CD4-positive, alpha-beta T cell (primary cell): ENCODE measurements at regions of chr1 and their contacts with region 1.

Region 1: DNA sequence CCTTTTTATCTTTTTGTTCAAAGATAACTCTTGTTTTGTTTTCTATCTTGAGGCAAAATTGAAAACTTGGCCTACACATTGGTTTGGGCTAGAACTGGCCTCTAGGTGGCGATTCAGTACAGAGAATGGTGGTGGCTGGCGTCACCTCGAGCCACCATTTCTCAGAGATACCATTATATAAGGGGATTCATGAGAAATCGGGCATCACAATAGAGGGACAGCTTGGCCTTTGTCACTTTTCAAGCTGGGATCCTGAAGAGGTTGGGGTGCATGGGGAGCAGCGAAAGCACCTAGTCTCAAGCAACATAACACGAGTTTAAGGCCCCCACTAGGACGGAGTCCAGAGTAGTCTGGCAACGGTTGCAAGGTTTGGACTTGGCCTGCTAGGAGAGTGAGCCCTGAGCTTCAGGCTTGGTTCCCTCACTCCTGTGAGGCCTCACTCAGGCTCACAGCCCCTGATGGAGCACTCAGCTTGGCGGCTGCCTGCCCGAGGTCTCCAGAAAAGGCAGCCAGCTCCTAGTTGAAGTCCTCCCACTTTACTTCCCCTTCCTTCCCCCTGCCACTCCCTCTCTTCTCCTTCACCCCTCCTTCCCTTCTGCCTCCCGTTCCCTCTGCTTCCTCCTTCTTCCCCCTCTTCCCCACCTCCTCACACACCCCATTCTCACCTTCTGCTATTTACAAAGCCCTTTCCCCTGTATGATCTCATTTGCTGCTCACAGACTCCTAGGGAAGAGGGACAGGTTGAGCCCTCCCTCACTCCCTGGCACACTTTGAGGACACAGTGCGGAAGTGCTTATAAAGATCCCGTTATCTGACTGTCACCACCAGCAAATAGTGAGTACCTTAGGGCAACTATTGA is 67.8 kb downstream of the LRIG2 start:
- DNase-seq: peak; percentile 20 to 75 (median 45)
- ATAC-seq: peak; percentile 76
- H3K4me3 ChIP-seq: no peak overlapping the region
- H3K4me3 Mint-ChIP-seq: peak overlapping the region; percentile 63
- H3K27ac ChIP-seq: no peak overlapping the region
- H3K27ac Mint-ChIP-seq: peak overlapping the region; percentile 25
- H3K4me1 ChIP-seq: peaks cover 7% of the 10 kb centered on the region
- H3K4me1 Mint-ChIP-seq: peaks cover 34% of the 10 kb centered on the region
- H3K27me3 ChIP-seq: no peaks in the 10 kb centered on the region
- H3K27me3 Mint-ChIP-seq: no peaks in the 10 kb centered on the region
- CTCF ChIP-seq: peak; percentile 83

Region 2: GRCh38 chr1:113452921-113453770 is 312.3 kb after region 1 on chr1:
- CTCF ChIA-PET with region 1: interaction called, 3 read pairs
- POLR2A ChIA-PET with region 1: interaction called, 4 read pairs
- intact Hi-C with region 1: loop called (anchors 1 to 2 kb)
- DNase-seq: peak in 5 of 14 experiments; percentile 0 to 47 (median 21)
- ATAC-seq: peak; percentile 59
- H3K4me3 ChIP-seq: no peak overlapping the region
- H3K4me3 Mint-ChIP-seq: no peak overlapping the region
- H3K27ac ChIP-seq: no peak overlapping the region
- H3K27ac Mint-ChIP-seq: no peak overlapping the region
- H3K4me1 ChIP-seq: no peaks in the 10 kb centered on the region
- H3K4me1 Mint-ChIP-seq: no peaks in the 10 kb centered on the region
- H3K27me3 ChIP-seq: no peaks in the 10 kb centered on the region
- H3K27me3 Mint-ChIP-seq: no peaks in the 10 kb centered on the region
- CTCF ChIP-seq: peak; percentile 65

Region 3: GRCh38 chr1:113677250-113678158 is 536.7 kb after region 1 on chr1:
- CTCF ChIA-PET with region 1: no interaction called
- POLR2A ChIA-PET with region 1: no interaction called
- intact Hi-C with region 1: loop called (anchors 1 kb)
- DNase-seq: peak in 4 of 14 experiments; percentile 3 to 58 (median 52)
- ATAC-seq: peak; percentile 49
- H3K4me3 ChIP-seq: no peak overlapping the region
- H3K4me3 Mint-ChIP-seq: no peak overlapping the region
- H3K27ac ChIP-seq: no peak overlapping the region
- H3K27ac Mint-ChIP-seq: no peak overlapping the region
- H3K4me1 ChIP-seq: no peaks in the 10 kb centered on the region
- H3K4me1 Mint-ChIP-seq: no peaks in the 10 kb centered on the region
- H3K27me3 ChIP-seq: no peaks in the 10 kb centered on the region
- H3K27me3 Mint-ChIP-seq: no peaks in the 10 kb centered on the region
- CTCF ChIP-seq: peak; percentile 69

Region 4: GRCh38 chr1:113850080-113850803 is 709.4 kb after region 1 on chr1:
- CTCF ChIA-PET with region 1: no interaction called
- POLR2A ChIA-PET with region 1: no interaction called
- intact Hi-C with region 1: loop called in 1 of 2 experiments (anchors 5 kb)
- DNase-seq: peak in 1 of 14 experiments; percentile 44
- ATAC-seq: peak; percentile 61
- H3K4me3 ChIP-seq: no peak overlapping the region
- H3K4me3 Mint-ChIP-seq: peak overlapping the region; percentile 36
- H3K27ac ChIP-seq: peak overlapping the region in 1 of 2 donors; percentile 29
- H3K27ac Mint-ChIP-seq: peak overlapping the region; percentile 83
- H3K4me1 ChIP-seq: peaks cover 8% of the 10 kb centered on the region
- H3K4me1 Mint-ChIP-seq: peaks cover 15% of the 10 kb centered on the region
- H3K27me3 ChIP-seq: no peaks in the 10 kb centered on the region
- H3K27me3 Mint-ChIP-seq: no peaks in the 10 kb centered on the region
- CTCF ChIP-seq: no peak

Region 5: DNA sequence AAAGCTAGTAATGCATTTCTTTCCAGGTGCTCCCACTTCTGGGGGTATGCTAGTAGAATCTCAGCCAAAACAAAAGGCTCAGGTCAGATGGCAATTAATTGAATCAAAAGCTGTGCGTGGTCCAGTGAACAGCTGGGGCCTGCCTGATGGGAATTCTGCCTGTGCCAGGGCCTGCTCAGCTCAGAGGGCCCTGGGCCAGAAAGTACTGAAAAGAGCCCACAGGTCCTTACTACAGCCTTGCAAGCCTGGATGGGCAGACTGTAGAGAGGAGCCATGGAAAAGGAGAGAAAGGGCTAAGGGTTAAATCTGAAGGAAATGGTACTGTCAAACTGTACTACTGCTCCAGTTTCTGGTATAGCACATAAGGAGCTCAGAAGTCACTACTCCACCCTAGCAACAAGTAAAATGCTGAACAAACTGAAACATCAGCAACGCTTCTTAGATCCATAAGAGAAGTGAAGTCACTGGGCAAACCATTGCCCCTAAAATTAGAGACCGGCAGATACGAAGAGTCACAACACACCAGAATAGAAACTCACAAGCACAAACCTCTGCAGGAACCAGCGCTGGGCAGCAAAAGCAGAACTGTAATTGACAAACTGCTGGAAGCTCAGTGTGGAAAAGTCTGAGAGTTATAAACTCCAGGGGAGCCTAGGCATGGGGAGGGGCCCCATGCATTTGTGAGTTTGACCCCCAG is 1134.0 kb after region 1 on chr1:
- CTCF ChIA-PET with region 1: no interaction called
- POLR2A ChIA-PET with region 1: no interaction called
- intact Hi-C with region 1: loop called (anchors 2 to 10 kb)
- DNase-seq: no peak
- ATAC-seq: no peak
- H3K4me3 ChIP-seq: no peak overlapping the region
- H3K4me3 Mint-ChIP-seq: no peak overlapping the region
- H3K27ac ChIP-seq: no peak overlapping the region
- H3K27ac Mint-ChIP-seq: no peak overlapping the region
- H3K4me1 ChIP-seq: no peaks in the 10 kb centered on the region
- H3K4me1 Mint-ChIP-seq: no peaks in the 10 kb centered on the region
- H3K27me3 ChIP-seq: peaks cover 0 to 3% of the 10 kb centered on the region in 2 experiments
- H3K27me3 Mint-ChIP-seq: no peaks in the 10 kb centered on the region
- CTCF ChIP-seq: no peak